ENCODE measurements at regions of chr7 and their contacts with region 1.

Region 1: DNA sequence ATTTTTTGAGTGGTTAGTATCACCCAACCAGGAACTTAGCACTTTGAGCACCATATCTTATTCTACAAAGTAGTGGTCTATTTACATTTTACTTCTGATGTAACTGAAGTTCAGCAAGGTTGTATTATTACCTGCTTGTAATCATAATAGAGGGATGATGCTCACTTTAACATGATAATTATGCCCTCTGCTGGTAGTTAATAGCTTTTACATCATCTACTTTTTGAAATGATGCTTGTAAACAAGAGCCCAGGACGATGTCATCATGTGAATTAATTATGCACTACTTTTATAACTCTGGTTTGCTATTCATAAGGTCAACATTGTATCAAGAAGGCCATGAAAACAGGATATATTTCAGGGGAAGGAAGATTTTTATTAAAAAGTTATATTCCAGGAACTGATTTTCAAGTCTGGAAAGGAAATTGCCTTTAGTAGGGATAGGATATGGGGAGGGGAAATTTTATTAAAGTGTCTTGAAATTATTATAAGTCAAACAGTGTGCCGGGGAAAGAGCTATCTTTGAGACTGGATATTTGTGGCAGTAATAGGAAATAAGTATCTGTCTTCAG is 80.3 kb upstream of the SCIN start:
- DNase-seq: peak; percentile 10
- H3K4me3 ChIP-seq: no peak overlapping the region
- H3K27ac ChIP-seq: no peak overlapping the region
- H3K27me3 ChIP-seq: no peaks in the 10 kb centered on the region
- CTCF ChIP-seq: peak; percentile 57

Region 2: GRCh38 chr7:12337095-12337494 is 153.1 kb before region 1 on chr7:
- CTCF ChIA-PET with region 1: no interaction called
- POLR2A ChIA-PET with region 1: no interaction called
- DNase-seq: no peak
- H3K4me3 ChIP-seq: no peak overlapping the region
- H3K27ac ChIP-seq: no peak overlapping the region
- H3K27me3 ChIP-seq: no peaks in the 10 kb centered on the region
- CTCF ChIP-seq: no peak

Region 3: GRCh38 chr7:12389089-12389700 is 101.0 kb before region 1 on chr7:
- CTCF ChIA-PET with region 1: interaction called, 18 read pairs
- POLR2A ChIA-PET with region 1: no interaction called
- DNase-seq: peak; percentile 36
- H3K4me3 ChIP-seq: no peak overlapping the region
- H3K27ac ChIP-seq: no peak overlapping the region
- H3K27me3 ChIP-seq: no peaks in the 10 kb centered on the region
- CTCF ChIP-seq: peak; percentile 93

Region 4: GRCh38 chr7:12436896-12437535 is 53.2 kb before region 1 on chr7:
- CTCF ChIA-PET with region 1: interaction called, 32 read pairs
- POLR2A ChIA-PET with region 1: no interaction called
- DNase-seq: no peak
- H3K4me3 ChIP-seq: no peak overlapping the region
- H3K27ac ChIP-seq: no peak overlapping the region
- H3K27me3 ChIP-seq: no peaks in the 10 kb centered on the region
- CTCF ChIP-seq: peak; percentile 24

Region 5: GRCh38 chr7:12467828-12468227 is 22.4 kb before region 1 on chr7:
- CTCF ChIA-PET with region 1: interaction called, 90 read pairs
- POLR2A ChIA-PET with region 1: no interaction called
- DNase-seq: no peak
- H3K4me3 ChIP-seq: no peak overlapping the region
- H3K27ac ChIP-seq: no peak overlapping the region
- H3K27me3 ChIP-seq: no peaks in the 10 kb centered on the region
- CTCF ChIP-seq: no peak

Region 6: DNA sequence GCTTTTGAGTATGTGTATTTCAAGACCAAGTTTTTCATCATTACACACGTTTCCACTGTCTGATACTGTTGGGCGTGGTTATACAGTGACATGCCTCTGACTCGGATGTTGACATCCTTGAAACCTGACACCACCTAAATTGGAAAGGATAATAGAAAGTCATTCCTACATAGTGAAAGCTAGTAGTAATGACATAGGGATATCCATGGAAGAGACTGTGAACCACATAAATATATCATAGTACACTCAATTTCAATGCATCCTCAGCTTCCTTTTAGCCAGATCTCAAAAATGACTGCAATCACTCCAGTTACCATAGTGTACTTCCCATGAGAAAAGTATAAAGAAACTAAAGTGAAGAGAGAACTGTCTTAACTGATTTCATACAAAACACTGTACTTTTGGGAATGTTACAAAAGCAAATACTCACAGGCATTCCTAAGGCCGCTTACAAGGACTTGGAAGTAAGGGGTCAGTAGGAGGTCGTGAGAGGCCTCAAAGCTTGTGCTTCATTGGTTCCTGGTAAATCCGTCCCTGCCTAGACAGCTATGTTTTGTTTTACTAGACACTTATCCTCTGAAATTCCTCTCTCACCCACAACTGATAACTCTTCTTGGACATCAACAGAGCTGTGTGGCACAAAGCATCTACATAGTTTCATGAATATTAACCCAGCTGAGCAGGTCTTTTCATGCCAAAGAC is 14.7 kb before region 1 on chr7:
- CTCF ChIA-PET with region 1: interaction called, 90 read pairs
- POLR2A ChIA-PET with region 1: no interaction called
- DNase-seq: no peak
- H3K4me3 ChIP-seq: no peak overlapping the region
- H3K27ac ChIP-seq: no peak overlapping the region
- H3K27me3 ChIP-seq: no peaks in the 10 kb centered on the region
- CTCF ChIP-seq: no peak

Region 7: DNA sequence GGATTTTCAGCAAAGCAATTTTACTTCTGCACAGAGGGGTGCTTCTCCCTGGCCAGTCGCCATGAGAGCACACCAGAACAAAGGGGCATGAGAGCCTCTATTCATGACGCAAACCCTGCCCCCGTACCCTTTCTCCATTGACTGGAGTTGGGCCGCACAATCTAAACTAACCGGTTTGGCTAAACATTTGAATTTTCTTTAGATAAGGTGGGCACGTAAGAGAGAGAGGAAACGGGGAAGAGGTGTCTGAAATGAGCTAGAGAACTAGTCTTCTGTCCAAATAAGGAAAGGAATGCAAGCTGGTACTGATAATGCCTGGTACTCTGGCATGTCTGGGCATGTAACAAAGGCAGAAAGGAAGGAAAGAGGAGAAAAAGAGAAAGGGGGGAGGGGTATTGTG is 67.1 kb after region 1 on chr7:
- CTCF ChIA-PET with region 1: no interaction called
- POLR2A ChIA-PET with region 1: no interaction called
- DNase-seq: no peak
- H3K4me3 ChIP-seq: no peak overlapping the region
- H3K27ac ChIP-seq: no peak overlapping the region
- H3K27me3 ChIP-seq: no peaks in the 10 kb centered on the region
- CTCF ChIP-seq: no peak